PC-9 (cell line): ENCODE measurements at regions of chr15 and their contacts with region 1.

Region 1: DNA sequence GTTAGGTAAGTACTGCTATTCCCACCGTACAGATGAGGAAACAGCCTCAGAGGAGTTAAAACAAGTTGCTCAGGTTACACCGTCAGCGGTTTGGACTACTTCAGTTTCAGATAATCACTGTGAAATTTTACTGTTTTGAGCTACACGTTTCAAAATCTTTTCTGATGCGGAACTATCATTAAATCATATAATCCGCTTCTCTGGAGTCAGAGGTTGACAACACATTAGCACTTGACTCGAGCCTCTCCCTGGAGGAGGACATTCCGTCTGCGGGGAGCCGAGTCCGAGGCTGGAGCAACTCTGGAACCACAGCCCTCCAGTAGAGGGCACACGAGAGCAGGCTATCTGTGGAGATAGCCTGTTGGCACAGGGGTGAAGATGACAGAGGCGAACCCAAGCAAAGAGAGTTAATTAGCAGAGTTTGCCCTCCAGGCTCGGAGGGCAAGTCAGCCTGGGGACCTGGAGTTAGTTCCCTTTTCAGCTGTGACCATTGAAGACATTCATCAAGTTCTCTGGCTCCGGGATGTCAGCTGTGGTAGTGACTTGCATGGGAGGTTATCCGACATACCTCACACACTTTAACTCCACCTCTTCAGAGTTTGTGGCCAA is 131.2 kb downstream of the IGF1R start:
- DNase-seq: peak; percentile 62 to 77
- H3K4me3 ChIP-seq: no peak overlapping the region
- H3K27ac ChIP-seq: no peak overlapping the region
- H3K4me1 ChIP-seq: peaks cover 7% of the 10 kb centered on the region; the same call in 1 of the 2 replicates
- H3K27me3 ChIP-seq: no peaks in the 10 kb centered on the region
- CTCF ChIP-seq: peak; percentile 91

Region 2: GRCh38 chr15:99059010-99059981 is 279.7 kb after region 1 on chr15:
- CTCF ChIA-PET with region 1: no interaction called
- POLR2A ChIA-PET with region 1: no interaction called
- intact Hi-C with region 1: loop called (anchors 2 kb)
- DNase-seq: peak; percentile 49 to 81
- H3K4me3 ChIP-seq: peak overlapping the region; percentile 56; the same call in 1 of the 2 replicates
- H3K27ac ChIP-seq: no peak overlapping the region
- H3K4me1 ChIP-seq: no peaks in the 10 kb centered on the region; the same call in 1 of the 2 replicates
- H3K27me3 ChIP-seq: peaks cover 25% of the 10 kb centered on the region
- CTCF ChIP-seq: peak; percentile 43

Region 3: GRCh38 chr15:99076552-99077308 is 297.2 kb after region 1 on chr15:
- CTCF ChIA-PET with region 1: no interaction called
- POLR2A ChIA-PET with region 1: no interaction called
- intact Hi-C with region 1: loop called (anchors 2 kb)
- DNase-seq: peak; percentile 51 to 58
- H3K4me3 ChIP-seq: peak overlapping the region; percentile 51; the same call in 1 of the 2 replicates
- H3K27ac ChIP-seq: no peak overlapping the region
- H3K4me1 ChIP-seq: no peaks in the 10 kb centered on the region
- H3K27me3 ChIP-seq: no peaks in the 10 kb centered on the region
- CTCF ChIP-seq: peak; percentile 92